PC-9 (cell line): ENCODE measurements at regions of chr12 and their contacts with region 1.

Region 1: DNA sequence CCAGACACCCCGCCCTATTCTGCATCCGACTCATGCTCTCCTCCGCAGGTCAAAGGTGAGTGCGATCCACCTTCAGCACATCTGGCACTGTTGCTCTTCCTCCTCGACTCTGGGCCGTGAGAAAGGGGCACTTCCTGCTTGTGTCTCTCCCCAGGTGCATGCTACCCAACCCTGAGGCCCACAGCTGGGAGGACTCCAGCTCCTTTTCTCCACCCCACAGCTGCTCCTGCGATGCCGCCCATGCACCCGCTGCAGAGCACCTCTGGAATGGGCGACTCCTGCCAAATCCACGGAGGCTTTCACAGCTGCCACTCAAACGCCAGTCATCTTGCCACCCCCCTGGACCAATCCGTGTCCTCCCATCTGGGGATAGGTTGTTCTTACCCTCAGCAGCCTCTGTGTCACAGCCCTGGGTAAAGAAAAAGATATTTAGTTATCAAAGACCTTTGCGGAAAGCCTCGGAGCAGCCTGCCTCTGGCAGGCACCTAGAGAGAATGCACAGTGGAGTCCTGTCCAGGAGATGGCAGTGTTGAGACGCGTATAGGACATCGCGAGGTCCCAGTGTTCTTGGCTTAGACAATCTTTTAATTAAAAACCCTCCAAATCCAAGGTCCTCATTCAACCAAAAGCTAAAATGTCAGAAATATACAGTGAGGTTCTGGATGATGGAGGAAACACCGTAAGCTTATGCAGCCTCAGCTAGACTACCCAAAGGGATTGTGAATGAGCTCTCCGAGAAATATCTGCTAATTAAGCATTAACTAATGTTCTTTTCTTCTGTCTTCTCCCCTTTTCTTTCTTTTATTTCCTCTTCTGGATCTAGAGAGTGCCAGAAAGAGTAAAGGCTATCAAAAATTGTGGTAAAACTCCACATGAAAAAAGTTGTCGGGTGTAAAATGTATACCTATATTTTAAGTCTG is 54.3 kb downstream of the MYRFL start:
- DNase-seq: peak; percentile 57 to 67
- H3K4me3 ChIP-seq: no peak overlapping the region
- H3K27ac ChIP-seq: no peak overlapping the region
- H3K4me1 ChIP-seq: no peaks in the 10 kb centered on the region
- H3K27me3 ChIP-seq: no peaks in the 10 kb centered on the region
- CTCF ChIP-seq: peak; percentile 92

Region 2: DNA sequence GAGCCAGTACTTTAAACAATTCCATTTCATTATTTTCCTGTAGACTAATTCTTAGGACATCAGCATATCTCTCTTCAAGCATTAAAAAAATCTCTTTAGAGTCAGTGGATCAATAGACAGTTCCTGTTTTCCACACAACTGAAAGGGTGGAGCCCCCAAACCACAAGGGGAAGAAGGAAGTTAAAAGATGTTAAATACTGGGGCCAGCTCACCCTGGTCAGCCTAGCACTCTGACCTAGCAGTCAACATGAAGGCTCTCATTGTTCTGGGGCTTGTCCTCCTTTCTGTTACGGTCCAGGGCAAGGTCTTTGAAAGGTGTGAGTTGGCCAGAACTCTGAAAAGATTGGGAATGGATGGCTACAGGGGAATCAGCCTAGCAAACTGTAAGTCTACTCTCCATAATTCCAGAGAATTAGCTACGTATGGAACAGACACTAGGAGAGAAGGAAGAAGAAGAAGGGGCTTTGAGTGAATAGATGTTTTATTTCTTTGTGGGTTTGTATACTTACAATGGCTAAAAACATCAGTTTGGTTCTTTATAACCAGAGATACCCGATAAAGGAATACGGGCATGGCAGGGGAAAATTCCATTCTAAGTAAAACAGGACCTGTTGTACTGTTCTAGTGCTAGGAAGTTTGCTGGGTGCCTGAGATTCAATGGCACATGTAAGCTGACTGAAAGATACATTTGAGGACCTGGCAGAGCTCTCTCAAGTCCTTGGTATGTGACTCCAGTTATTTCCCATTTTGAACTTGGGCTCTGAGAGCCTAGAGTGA is 531.0 kb before region 1 on chr12 and contains the start of gene LYZ:
- CTCF ChIA-PET with region 1: no interaction called
- POLR2A ChIA-PET with region 1: interaction called, 10 read pairs
- intact Hi-C with region 1: no loop called
- DNase-seq: no peak
- H3K4me3 ChIP-seq: no peak within 1 kb of the TSS
- H3K27ac ChIP-seq: no peak within 1 kb of the TSS
- H3K4me1 ChIP-seq: peaks cover 8% of the 10 kb centered on the region
- H3K27me3 ChIP-seq: no peaks in the 10 kb centered on the region
- CTCF ChIP-seq: no peak
- total RNA-seq, gene LYZ: not detected in 2 replicates

Region 3: GRCh38 chr12:69666798-69667197 is 212.5 kb before region 1 on chr12:
- CTCF ChIA-PET with region 1: interaction called, 12 read pairs
- POLR2A ChIA-PET with region 1: no interaction called
- intact Hi-C with region 1: no loop called
- DNase-seq: no peak
- H3K4me3 ChIP-seq: no peak overlapping the region
- H3K27ac ChIP-seq: no peak overlapping the region
- H3K4me1 ChIP-seq: no peaks in the 10 kb centered on the region
- H3K27me3 ChIP-seq: no peaks in the 10 kb centered on the region
- CTCF ChIP-seq: no peak

Region 4: GRCh38 chr12:69810870-69811498 is 68.3 kb before region 1 on chr12:
- CTCF ChIA-PET with region 1: no interaction called
- POLR2A ChIA-PET with region 1: no interaction called
- intact Hi-C with region 1: no loop called
- DNase-seq: no peak
- H3K4me3 ChIP-seq: no peak overlapping the region
- H3K27ac ChIP-seq: no peak overlapping the region
- H3K4me1 ChIP-seq: no peaks in the 10 kb centered on the region
- H3K27me3 ChIP-seq: no peaks in the 10 kb centered on the region
- CTCF ChIP-seq: no peak

Region 5: DNA sequence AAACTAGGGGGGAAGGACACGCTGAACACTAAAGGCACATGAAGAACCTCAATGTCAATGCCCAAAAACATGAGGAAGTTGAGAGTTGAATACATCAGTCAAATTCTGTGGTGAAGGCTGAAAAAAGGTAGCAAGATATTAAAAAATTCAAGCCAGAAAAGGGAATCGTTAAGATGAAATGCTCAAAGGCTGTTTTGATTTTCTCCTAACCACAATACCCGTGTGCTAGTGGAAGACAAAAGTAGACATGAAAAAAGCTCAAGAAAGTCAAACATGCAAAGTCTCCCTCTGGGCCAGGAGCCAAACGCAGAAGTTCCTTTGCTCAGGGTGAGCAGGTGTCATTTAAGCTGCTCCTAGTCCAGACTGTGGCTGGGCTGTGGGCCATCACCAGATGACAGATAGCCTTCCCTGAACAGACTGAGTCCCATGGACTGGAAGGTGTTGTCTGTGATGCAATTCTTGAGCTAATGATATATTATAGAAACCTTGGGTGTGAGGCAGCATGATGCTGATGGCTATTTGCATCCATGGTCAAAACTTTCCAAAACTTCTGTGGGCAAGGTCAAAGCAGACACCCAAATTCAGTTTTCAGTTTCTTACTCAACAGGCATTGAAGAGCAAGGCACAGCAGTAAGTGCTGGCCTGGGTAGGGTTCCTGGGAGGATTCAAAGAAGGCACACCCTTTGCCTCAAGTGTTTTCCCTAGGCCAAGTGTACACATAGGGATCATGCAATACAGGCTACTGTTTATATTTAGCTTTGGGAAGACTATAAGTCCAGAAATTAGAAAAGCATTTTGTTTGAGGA is 27.3 kb after region 1 on chr12:
- CTCF ChIA-PET with region 1: no interaction called
- POLR2A ChIA-PET with region 1: no interaction called
- intact Hi-C with region 1: no loop called
- DNase-seq: no peak
- H3K4me3 ChIP-seq: no peak overlapping the region
- H3K27ac ChIP-seq: no peak overlapping the region
- H3K4me1 ChIP-seq: no peaks in the 10 kb centered on the region
- H3K27me3 ChIP-seq: no peaks in the 10 kb centered on the region
- CTCF ChIP-seq: no peak

Region 6: DNA sequence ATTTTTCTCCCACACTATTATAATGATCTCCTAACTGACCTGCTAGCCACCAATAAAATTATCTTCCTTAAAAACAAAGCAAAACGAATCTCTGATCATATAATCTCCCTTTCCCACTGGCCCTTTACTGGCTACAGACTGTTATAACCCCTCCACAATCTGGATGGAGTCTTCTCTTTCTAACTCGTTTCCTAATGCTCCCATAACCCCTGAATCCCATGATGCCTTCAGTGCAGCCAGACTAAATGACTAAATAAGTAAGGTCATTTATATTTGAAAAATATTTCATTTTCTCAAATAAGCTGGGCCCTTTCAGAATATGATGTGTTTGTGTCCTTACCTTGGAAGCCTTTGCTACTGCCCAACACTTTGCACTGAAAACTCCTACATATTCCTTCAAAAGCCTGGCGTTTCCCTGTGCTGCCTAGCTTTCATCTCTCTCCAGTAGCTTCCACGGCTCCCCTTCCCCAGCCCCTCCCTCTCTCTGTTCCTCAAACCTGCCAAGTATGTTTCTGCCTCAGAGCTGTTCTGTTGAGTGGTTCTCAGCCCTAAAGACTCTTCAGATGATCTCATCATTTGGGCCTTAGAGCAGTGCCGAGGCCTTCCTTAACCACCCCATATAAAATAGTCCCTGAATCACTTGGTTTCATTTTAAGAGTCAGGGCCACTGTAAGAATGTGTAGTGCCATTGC is 37.4 kb after region 1 on chr12:
- CTCF ChIA-PET with region 1: no interaction called
- POLR2A ChIA-PET with region 1: no interaction called
- intact Hi-C with region 1: no loop called
- DNase-seq: no peak
- H3K4me3 ChIP-seq: no peak overlapping the region
- H3K27ac ChIP-seq: no peak overlapping the region
- H3K4me1 ChIP-seq: no peaks in the 10 kb centered on the region
- H3K27me3 ChIP-seq: no peaks in the 10 kb centered on the region
- CTCF ChIP-seq: no peak

Region 7: DNA sequence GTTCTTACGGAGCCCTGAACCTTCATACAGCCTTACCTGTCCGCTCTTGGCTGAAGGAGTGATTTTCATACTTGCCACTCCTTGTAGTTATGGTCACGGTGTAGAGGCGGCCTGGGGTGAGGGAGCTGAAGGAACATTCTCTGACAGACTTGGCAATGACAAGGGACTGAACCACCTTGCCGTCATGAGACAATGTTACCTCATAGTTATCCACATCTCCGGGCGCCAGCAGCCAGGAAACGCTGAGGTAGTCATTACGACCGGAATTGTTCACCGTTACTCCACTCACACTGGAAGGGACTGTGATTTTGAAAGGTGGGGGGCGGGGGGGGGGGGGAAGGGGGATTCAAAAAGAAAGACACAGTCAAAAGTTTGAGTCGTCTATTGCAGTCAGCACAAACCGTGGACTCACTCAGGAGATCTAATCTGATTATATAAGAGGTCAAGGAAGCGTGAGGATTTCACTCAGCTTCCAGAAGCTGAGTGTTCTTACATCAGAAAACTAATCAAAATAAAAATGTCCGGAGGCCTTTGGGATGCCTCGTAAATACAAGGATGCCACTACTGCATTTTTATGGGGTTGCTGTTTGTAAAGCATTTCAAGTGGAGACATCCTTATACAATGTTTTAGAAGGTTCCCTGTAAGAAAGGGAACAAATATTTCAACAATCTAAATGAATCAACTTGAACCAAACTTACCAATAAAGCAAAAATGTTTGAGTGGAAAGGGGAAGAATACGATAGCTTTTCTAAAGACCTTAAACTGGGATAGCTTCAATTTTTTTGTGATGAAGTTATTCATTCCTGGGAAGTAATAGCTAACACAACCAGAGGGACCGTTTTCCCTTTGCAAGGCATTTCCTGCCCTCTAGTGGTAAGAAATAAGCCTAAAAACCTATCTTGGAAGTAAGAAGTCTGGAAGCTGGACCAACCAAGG is 697.3 kb after region 1 on chr12:
- CTCF ChIA-PET with region 1: interaction called, 3 read pairs
- POLR2A ChIA-PET with region 1: no interaction called
- intact Hi-C with region 1: loop called (anchors 1 kb)
- DNase-seq: peak in 1 of 2 experiments; percentile 65
- H3K4me3 ChIP-seq: no peak overlapping the region
- H3K27ac ChIP-seq: no peak overlapping the region
- H3K4me1 ChIP-seq: no peaks in the 10 kb centered on the region
- H3K27me3 ChIP-seq: no peaks in the 10 kb centered on the region
- CTCF ChIP-seq: peak; percentile 86

Region 8: GRCh38 chr12:70849265-70849960 is 970.1 kb after region 1 on chr12:
- CTCF ChIA-PET with region 1: no interaction called
- POLR2A ChIA-PET with region 1: no interaction called
- intact Hi-C with region 1: loop called (anchors 5 kb)
- DNase-seq: peak in 1 of 2 experiments; percentile 37
- H3K4me3 ChIP-seq: no peak overlapping the region
- H3K27ac ChIP-seq: no peak overlapping the region
- H3K4me1 ChIP-seq: no peaks in the 10 kb centered on the region
- H3K27me3 ChIP-seq: no peaks in the 10 kb centered on the region
- CTCF ChIP-seq: peak; percentile 63